GM23248 (cell line): ENCODE measurements at regions of chr14 and their contacts with region 1.

Region 1: DNA sequence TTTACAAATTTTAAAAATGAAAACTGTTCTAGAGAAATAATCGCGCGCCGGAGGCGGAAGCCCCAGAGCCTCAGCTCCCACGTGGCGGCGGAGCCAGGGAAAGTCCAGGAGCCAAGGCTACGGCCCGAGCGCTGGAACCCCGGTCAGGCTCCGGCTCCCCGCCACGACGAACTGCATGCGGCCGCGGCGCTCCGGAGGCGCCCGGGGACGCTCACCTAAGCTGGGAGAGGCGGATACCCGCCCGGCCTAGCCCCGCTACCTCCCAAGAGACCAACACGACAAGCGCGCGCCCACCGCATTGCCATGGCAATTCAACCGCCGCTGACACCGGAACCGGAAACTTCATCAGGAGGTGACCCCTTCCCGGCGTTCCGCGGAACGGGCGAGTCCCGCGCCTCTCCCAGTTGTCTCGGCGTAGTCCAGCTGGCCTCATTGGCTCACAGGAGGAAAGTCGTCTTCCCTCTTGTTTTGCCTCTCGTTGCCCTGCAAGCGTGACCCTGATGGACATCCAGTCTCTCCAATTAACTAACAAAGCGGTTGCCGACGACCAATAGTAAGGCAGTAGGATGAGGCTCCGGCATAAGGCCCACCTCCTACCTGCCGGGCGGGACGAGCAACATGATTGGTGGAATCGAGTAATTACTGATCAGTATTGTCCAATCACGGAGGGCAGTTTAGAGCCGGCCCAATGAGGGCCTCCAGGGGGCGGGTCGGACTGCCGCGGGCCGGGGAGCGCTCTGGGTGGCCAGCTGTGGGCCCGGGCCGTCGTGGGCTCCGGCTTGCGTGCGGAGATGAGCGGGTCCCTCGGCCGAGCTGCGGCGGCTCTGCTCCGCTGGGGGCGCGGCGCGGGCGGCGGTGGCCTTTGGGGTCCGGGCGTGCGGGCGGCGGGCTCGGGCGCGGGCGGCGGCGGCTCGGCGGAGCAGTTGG is at the start of gene GLRX5:
- DNase-seq: peak; percentile 99
- H3K4me3 ChIP-seq: peak within 1 kb of the TSS; percentile 83
- H3K27ac ChIP-seq: peak within 1 kb of the TSS; percentile 87
- H3K4me1 ChIP-seq: peaks cover 49% of the 10 kb centered on the region
- H3K27me3 ChIP-seq: no peaks in the 10 kb centered on the region
- total RNA-seq, gene GLRX5: 38.6 and 46.0 TPM in 2 replicates

Region 2: GRCh38 chr14:96275177-96276112 is 740.9 kb after region 1 on chr14:
- in situ Hi-C with region 1: loop called (anchors 25 kb)
- DNase-seq: peak; percentile 83
- H3K4me3 ChIP-seq: no peak overlapping the region
- H3K27ac ChIP-seq: peak overlapping the region; percentile 77
- H3K4me1 ChIP-seq: peaks cover 25% of the 10 kb centered on the region
- H3K27me3 ChIP-seq: no peaks in the 10 kb centered on the region